GM12878 (cell line): ENCODE measurements at regions of chr12 and their contacts with region 1.

Region 1: DNA sequence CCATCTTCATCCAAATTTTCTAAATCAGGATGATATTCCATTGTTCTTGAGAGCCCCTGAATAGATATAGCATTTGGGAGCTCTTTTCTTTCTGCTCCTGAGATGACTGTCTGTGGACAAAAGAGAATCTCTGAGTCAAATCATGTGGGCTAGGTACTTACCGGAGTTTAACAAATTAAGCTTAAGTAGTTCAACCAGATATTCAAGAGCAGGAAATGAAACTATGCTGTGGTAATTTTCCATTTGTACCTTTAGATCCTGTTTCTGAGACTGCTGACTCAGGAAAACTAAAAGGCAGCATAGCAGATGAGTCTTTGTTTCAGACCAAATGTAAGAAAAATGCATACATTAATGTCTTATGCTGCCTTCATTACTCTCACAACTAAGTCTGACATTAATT is at the start of gene CLEC7A:
- DNase-seq: peak; percentile 73
- ATAC-seq: peak; percentile 85
- H3K4me3 ChIP-seq: no peak within 1 kb of the TSS
- H3K27ac ChIP-seq: no peak within 1 kb of the TSS
- H3K4me1 ChIP-seq: peaks cover 8% of the 10 kb centered on the region; the same call in 1 of the 2 replicates
- H3K27me3 ChIP-seq: no peaks in the 10 kb centered on the region; a peak in 1 of 4 replicates
- CTCF ChIP-seq: no peak
- EP300 ChIP-seq: peak; percentile 63 to 81
- POLR2A ChIP-seq: no peak
- RAD21 ChIP-seq: no peak
- polyA plus RNA-seq, gene CLEC7A: not detected

Region 2: GRCh38 chr12:9948606-9949296 is 181.3 kb before region 1 on chr12:
- CTCF ChIA-PET with region 1: no interaction called
- POLR2A ChIA-PET with region 1: no interaction called
- RAD21 ChIA-PET with region 1: no interaction called
- SMC1A ChIA-PET with region 1: no interaction called
- in situ Hi-C with region 1: no loop called
- intact Hi-C with region 1: loop called (anchors 5 kb)
- DNase-seq: peak; percentile 82
- ATAC-seq: peak; percentile 99
- H3K4me3 ChIP-seq: 0 out of 2 replicates have a peak overlapping the region, but pooled peaks have one; percentile 9
- H3K27ac ChIP-seq: peak overlapping the region; percentile 72
- H3K4me1 ChIP-seq: peaks cover 33% of the 10 kb centered on the region
- H3K27me3 ChIP-seq: no peaks in the 10 kb centered on the region; a peak in 1 of 4 replicates
- CTCF ChIP-seq: no peak
- EP300 ChIP-seq: peak in 1 of 2 experiments; percentile 77; a peak in 2 of 4 replicates
- POLR2A ChIP-seq: no peak
- RAD21 ChIP-seq: no peak

Region 3: GRCh38 chr12:10082117-10082874 is 47.7 kb before region 1 on chr12:
- CTCF ChIA-PET with region 1: no interaction called
- POLR2A ChIA-PET with region 1: no interaction called
- RAD21 ChIA-PET with region 1: no interaction called
- SMC1A ChIA-PET with region 1: no interaction called
- in situ Hi-C with region 1: no loop called
- intact Hi-C with region 1: no loop called
- DNase-seq: no peak
- ATAC-seq: no peak
- H3K4me3 ChIP-seq: no peak overlapping the region
- H3K27ac ChIP-seq: no peak overlapping the region
- H3K4me1 ChIP-seq: no peaks in the 10 kb centered on the region
- H3K27me3 ChIP-seq: no peaks in the 10 kb centered on the region
- CTCF ChIP-seq: no peak
- EP300 ChIP-seq: no peak
- POLR2A ChIP-seq: no peak
- RAD21 ChIP-seq: no peak

Region 4: GRCh38 chr12:10119066-10119465 is 11.0 kb before region 1 on chr12:
- CTCF ChIA-PET with region 1: interaction called, 11 read pairs
- POLR2A ChIA-PET with region 1: no interaction called
- RAD21 ChIA-PET with region 1: no interaction called
- SMC1A ChIA-PET with region 1: interaction called, 4 read pairs
- in situ Hi-C with region 1: no loop called
- intact Hi-C with region 1: no loop called
- DNase-seq: no peak
- ATAC-seq: no peak
- H3K4me3 ChIP-seq: no peak overlapping the region
- H3K27ac ChIP-seq: no peak overlapping the region
- H3K4me1 ChIP-seq: no peaks in the 10 kb centered on the region
- H3K27me3 ChIP-seq: no peaks in the 10 kb centered on the region; a peak in 1 of 4 replicates
- CTCF ChIP-seq: no peak
- EP300 ChIP-seq: no peak
- POLR2A ChIP-seq: no peak
- RAD21 ChIP-seq: no peak

Region 5: GRCh38 chr12:10540776-10541205 is 410.7 kb after region 1 on chr12:
- CTCF ChIA-PET with region 1: no interaction called
- POLR2A ChIA-PET with region 1: no interaction called
- RAD21 ChIA-PET with region 1: no interaction called
- SMC1A ChIA-PET with region 1: no interaction called
- in situ Hi-C with region 1: no loop called
- intact Hi-C with region 1: no loop called
- DNase-seq: peak; percentile 79
- ATAC-seq: peak; percentile 96
- H3K4me3 ChIP-seq: no peak overlapping the region
- H3K27ac ChIP-seq: peak overlapping the region; percentile 72
- H3K4me1 ChIP-seq: peaks cover 8% of the 10 kb centered on the region
- H3K27me3 ChIP-seq: no peaks in the 10 kb centered on the region
- CTCF ChIP-seq: no peak
- EP300 ChIP-seq: no peak; a peak in 1 of 4 replicates
- POLR2A ChIP-seq: no peak
- RAD21 ChIP-seq: peak; percentile 27; the same call in 1 of the 2 replicates